MCF 10A (cell line): ENCODE measurements at regions of chr9 and their contacts with region 1.

Region 1: GRCh38 chr9:128552153-128552743 is at the start of gene SPTAN1:
- DNase-seq: peak; percentile 86
- H3K4me3 Mint-ChIP-seq: no peak within 1 kb of the TSS
- H3K27ac Mint-ChIP-seq: peak within 1 kb of the TSS; percentile 90
- H3K4me1 Mint-ChIP-seq: peaks cover 17% of the 10 kb centered on the region
- H3K27me3 Mint-ChIP-seq: no peaks in the 10 kb centered on the region
- CTCF ChIP-seq: no peak
- total RNA-seq, gene SPTAN1: 254 and 280 TPM in 2 replicates

Region 2: GRCh38 chr9:128370826-128371621 is 181.2 kb before region 1 on chr9 and contains the start of gene URM1:
- CTCF ChIA-PET with region 1: no interaction called
- POLR2A ChIA-PET with region 1: interaction called, 13 read pairs
- intact Hi-C with region 1: no loop called
- DNase-seq: peak; percentile 96
- H3K4me3 Mint-ChIP-seq: peak within 1 kb of the TSS; percentile 84
- H3K27ac Mint-ChIP-seq: peak within 1 kb of the TSS; percentile 84
- H3K4me1 Mint-ChIP-seq: peaks cover 34% of the 10 kb centered on the region
- H3K27me3 Mint-ChIP-seq: no peaks in the 10 kb centered on the region
- CTCF ChIP-seq: no peak
- total RNA-seq, gene URM1: 56.8 and 57.7 TPM in 2 replicates

Region 3: DNA sequence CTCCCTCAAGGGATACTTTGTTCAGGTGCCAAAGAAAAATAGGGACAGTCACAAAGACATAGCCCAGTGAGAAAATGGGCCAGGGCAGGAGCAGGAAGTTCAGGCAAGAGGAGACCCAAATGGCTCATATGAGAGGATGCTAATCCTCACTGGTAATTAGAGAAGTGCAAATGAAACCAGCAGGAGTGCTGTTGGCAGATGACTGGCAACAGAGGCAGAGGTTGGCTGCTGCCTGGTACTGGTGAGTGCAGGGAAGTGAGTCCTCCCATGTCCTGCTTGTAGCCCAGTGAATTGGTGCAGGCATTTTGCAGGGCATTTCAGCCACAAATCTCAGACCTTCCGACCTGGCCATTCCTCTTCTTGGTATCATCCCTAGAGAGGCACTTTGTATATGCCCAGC is 73.0 kb before region 1 on chr9:
- CTCF ChIA-PET with region 1: no interaction called
- POLR2A ChIA-PET with region 1: no interaction called
- intact Hi-C with region 1: no loop called
- DNase-seq: no peak
- H3K4me3 Mint-ChIP-seq: no peak overlapping the region
- H3K27ac Mint-ChIP-seq: no peak overlapping the region
- H3K4me1 Mint-ChIP-seq: no peaks in the 10 kb centered on the region
- H3K27me3 Mint-ChIP-seq: no peaks in the 10 kb centered on the region
- CTCF ChIP-seq: no peak

Region 4: DNA sequence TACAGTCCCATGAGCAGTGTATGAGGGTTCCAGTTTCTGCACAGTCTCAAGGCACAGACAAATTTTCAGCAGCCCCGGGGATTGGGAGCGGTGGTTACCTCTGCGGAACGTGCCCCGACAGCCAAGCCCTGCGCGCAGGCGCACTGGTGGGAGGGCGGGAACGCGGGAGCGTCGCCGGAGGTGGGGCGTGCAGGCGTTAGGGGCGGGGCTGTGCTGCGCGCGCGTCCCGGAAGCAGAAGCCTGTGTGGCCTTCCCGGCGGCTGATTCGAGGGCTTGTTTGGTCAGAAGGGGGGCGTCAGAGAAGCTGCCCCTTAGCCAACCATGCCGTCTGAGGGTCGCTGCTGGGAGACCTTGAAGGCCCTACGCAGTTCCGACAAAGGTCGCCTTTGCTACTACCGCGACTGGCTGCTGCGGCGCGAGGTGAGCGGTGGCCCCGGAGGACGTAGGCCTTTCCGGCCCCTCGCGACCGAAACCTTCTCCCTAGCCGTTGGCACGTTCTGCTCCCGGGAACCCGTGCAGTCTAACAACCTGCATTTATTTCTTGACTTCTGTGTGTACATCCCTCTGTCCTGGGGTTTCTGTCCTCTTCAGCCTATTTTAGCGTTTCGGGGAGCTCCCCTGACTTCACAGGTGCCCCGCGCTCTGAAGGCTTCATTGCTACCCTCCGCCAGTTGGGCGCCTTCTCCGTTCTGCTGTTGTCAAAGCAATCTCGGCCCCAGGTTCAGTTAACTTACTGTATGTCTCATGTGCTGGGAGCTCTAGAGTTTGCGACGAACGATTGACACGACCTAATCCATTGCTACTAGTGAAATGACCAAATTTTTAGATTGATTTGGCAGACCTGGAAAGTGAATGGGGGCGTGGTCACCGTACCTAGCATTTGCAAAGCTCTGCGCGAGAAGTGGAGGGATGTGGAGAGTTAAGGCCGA is 47.5 kb before region 1 on chr9 and contains the start of gene GLE1:
- CTCF ChIA-PET with region 1: no interaction called
- POLR2A ChIA-PET with region 1: interaction called, 85 read pairs
- intact Hi-C with region 1: loop called (anchors 2 kb)
- DNase-seq: peak; percentile 93
- H3K4me3 Mint-ChIP-seq: peak within 1 kb of the TSS; percentile 89
- H3K27ac Mint-ChIP-seq: peak within 1 kb of the TSS; percentile 84
- H3K4me1 Mint-ChIP-seq: no peaks in the 10 kb centered on the region
- H3K27me3 Mint-ChIP-seq: no peaks in the 10 kb centered on the region
- CTCF ChIP-seq: no peak
- total RNA-seq, gene GLE1: 34.1 TPM in 2 replicates

Region 5: DNA sequence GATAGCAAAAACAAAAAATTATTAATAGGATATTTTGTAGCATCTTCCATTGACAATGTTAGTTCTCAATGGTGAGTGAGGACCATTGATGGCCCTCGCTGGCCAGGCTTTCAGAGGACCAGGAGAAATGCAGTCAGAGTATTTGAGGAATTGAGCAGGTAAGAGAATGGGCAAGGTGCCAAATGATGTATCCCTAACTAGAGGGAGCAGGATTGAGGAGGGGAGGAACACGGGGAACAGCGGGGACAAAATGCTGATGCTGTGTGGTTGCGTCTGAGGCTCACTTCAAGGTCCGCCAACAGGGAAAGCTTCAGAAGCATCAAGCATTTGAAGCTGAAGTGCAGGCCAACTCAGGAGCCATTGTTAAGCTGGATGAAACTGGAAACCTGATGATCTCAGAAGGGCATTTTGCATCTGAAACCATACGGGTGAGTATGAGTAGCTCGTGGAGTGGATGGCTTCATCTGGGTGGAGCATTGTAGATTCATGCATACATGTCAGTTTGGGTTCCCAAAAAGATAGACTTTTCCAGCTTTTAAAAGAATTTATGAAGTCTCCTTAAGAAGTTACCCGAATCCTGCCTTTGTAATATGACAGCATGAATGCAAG is 16.3 kb after region 1 on chr9:
- CTCF ChIA-PET with region 1: no interaction called
- POLR2A ChIA-PET with region 1: interaction called, 26 read pairs
- intact Hi-C with region 1: no loop called
- DNase-seq: no peak
- H3K4me3 Mint-ChIP-seq: no peak overlapping the region
- H3K27ac Mint-ChIP-seq: peak overlapping the region; percentile 54
- H3K4me1 Mint-ChIP-seq: peaks cover 6% of the 10 kb centered on the region
- H3K27me3 Mint-ChIP-seq: no peaks in the 10 kb centered on the region
- CTCF ChIP-seq: no peak

Region 6: DNA sequence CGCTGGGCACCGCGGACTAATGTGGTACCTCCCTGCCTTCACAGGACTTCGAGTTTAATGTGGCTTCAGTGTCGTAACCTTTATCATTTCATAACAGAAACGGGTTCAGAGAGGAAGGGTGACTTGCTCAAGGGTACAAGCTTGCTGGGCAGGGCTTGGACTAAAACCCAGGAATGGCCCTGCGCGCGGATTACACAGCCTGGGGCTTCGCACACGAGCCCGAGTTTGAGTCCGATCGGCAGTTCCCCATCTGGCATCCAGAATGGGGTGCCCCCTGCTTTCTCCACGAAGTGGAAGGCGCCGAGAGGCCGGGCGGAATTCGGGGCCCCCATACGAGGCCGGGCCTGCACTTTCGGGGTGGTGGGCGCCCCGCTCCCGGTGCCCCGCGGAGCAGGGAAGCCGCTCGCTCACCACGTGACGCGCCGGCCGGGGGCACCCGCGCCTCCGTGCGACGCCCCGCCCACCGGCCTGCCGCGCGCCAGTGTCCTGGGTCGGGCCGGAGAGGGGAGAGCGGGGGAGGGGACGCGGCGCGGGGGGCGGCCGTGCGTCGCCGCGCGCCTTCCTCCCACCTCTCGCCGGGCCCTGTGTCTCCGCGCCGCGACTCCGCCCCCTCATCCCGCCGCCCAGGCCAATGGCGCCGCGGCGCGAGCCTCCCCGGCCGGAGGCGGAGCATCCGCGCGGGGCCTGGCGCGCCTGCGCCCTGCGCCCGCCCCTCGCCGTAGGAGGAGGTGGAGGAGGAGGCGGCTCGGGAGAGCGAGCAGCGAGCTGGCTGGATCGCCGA is 136.5 kb after region 1 on chr9 and contains the start of gene SET:
- CTCF ChIA-PET with region 1: interaction called, 4 read pairs
- POLR2A ChIA-PET with region 1: interaction called, 26 read pairs
- intact Hi-C with region 1: no loop called
- DNase-seq: peak; percentile 92
- H3K4me3 Mint-ChIP-seq: peak within 1 kb of the TSS; percentile 90
- H3K27ac Mint-ChIP-seq: peak within 1 kb of the TSS; percentile 67
- H3K4me1 Mint-ChIP-seq: peaks cover 40% of the 10 kb centered on the region
- H3K27me3 Mint-ChIP-seq: no peaks in the 10 kb centered on the region
- CTCF ChIP-seq: no peak
- total RNA-seq, gene SET: 512 and 563 TPM in 2 replicates